Esophagus muscularis mucosa (tissue), 4 donors: ENCODE measurements at regions of chr5 and their contacts with region 1.

Region 1: GRCh38 chr5:65481635-65482295 is at the start of gene ADAMTS6:
- DNase-seq: peak; percentile 94
- H3K4me3 ChIP-seq: peak within 1 kb of the TSS; percentile 53 to 73 (median 66)
- H3K27ac ChIP-seq: peak within 1 kb of the TSS; percentile 90 to 96 (median 92)
- H3K4me1 ChIP-seq: peaks cover 10 to 35% (median 26%) of the 10 kb centered on the region in 4 donors
- H3K27me3 ChIP-seq: no peaks in the 10 kb centered on the region
- CTCF ChIP-seq: no peak
- EP300 ChIP-seq: no peak
- POLR2A ChIP-seq: no peak
- total RNA-seq, gene ADAMTS6: 1.4 to 4.2 (median 2.7) TPM

Region 2: GRCh38 chr5:64811050-64811640 is 670.6 kb before region 1 on chr5:
- intact Hi-C with region 1: loop called (anchors 5 kb)
- DNase-seq: no peak
- H3K4me3 ChIP-seq: no peak overlapping the region
- H3K27ac ChIP-seq: no peak overlapping the region
- H3K4me1 ChIP-seq: peaks cover 4 to 12% (median 9%) of the 10 kb centered on the region in 4 donors
- H3K27me3 ChIP-seq: no peaks in the 10 kb centered on the region
- CTCF ChIP-seq: peak; percentile 57 to 68 (median 65)
- EP300 ChIP-seq: no peak
- POLR2A ChIP-seq: no peak

Region 3: GRCh38 chr5:64958757-64959391 is 522.9 kb before region 1 on chr5:
- intact Hi-C with region 1: loop called (anchors 5 kb)
- DNase-seq: no peak
- H3K4me3 ChIP-seq: no peak overlapping the region
- H3K27ac ChIP-seq: no peak overlapping the region
- H3K4me1 ChIP-seq: no peaks in the 10 kb centered on the region
- H3K27me3 ChIP-seq: no peaks in the 10 kb centered on the region
- CTCF ChIP-seq: peak; percentile 49 to 71 (median 59)
- EP300 ChIP-seq: no peak
- POLR2A ChIP-seq: no peak

Region 4: DNA sequence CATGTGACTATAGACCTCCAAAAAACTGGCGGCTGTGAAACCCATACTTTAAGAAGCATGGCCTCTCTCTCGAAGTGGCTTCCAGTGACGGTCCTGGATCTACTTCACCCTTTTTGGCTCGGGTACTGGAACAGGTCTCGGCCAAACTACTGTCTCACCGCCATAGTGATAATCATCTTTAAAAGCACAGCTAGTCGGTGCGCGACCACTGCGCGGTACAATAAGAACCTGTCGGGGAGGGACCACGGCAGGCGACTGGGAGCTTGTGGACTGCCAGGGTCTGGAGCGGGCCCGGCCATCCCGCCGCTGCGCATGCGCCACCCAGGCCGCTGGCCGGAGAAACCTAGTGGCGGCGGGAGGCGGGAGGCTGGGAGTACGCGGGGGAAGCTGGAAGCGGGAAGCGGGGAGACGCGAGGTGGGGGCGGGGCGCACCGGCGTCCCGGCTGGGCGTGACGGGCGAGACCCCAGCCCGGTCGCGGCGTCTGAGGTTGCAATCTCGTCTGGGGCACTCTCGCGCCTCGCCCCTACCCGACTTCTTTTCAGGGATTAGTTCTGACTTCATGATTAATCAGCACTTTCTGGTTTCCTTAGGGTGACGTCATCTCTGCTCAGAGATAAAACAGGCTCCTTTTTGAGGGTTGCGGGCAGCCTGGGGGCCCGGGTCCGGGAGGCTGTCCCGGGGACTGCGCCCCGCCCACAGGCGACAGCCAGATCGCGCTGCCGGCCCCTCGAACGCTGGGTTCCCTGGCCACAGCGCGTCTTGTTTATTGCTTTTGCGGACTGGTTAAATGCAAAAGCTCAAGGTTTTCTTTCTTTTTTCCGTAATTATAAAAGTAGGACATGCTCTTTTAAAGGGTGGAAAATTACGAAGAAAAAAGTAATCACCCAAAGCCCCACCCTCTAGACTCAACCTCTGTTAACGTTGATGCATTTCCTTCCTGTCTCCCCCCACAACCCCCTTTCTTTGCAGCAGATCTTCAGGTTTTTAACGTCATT is 446.3 kb before region 1 on chr5:
- intact Hi-C with region 1: loop called (anchors 5 kb)
- DNase-seq: peak; percentile 96
- H3K4me3 ChIP-seq: peak overlapping the region; percentile 68 to 86 (median 70)
- H3K27ac ChIP-seq: peak overlapping the region; percentile 90 to 95 (median 94)
- H3K4me1 ChIP-seq: peaks cover 25 to 35% (median 32%) of the 10 kb centered on the region in 4 donors
- H3K27me3 ChIP-seq: no peaks in the 10 kb centered on the region
- CTCF ChIP-seq: no peak
- EP300 ChIP-seq: no peak
- POLR2A ChIP-seq: peak; percentile 3

Region 5: GRCh38 chr5:65102828-65103711 is 378.7 kb before region 1 on chr5:
- intact Hi-C with region 1: loop called (anchors 2 kb)
- DNase-seq: no peak
- H3K4me3 ChIP-seq: peak overlapping the region; percentile 60 to 74 (median 64)
- H3K27ac ChIP-seq: peak overlapping the region; percentile 77 to 90 (median 85)
- H3K4me1 ChIP-seq: peaks cover 10 to 30% (median 21%) of the 10 kb centered on the region in 4 donors
- H3K27me3 ChIP-seq: no peaks in the 10 kb centered on the region
- CTCF ChIP-seq: peak; percentile 41 to 48 (median 48)
- EP300 ChIP-seq: no peak
- POLR2A ChIP-seq: no peak

Region 6: DNA sequence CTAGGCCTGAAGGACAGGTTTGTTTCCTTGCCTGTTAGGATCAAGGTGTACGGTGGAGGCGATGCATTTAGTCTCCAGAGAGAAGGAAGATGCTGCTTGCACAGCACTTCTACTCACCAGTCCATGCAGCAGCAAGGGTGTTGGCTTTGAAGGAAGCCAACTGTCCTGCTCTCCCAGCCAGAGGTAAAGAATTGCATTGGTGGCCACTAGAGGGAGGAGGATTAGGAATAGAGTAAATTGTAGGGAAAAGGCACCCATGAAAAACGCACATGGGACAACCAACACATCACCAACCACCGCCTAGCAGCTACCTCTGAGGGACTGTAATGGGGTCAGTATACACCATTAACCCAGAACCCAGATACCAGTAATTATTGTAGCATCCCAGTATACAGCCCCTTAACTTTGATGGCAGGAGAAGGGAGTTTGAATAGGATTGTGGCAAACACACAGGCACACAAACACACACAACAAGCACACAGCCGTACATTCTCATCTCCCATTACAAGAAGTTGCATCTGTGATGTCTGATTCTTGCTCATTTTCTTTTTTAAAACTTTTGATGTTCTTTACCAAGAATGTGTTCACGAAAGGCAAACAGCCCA is 267.7 kb before region 1 on chr5:
- intact Hi-C with region 1: loop called (anchors 10 kb)
- DNase-seq: no peak
- H3K4me3 ChIP-seq: no peak overlapping the region
- H3K27ac ChIP-seq: no peak overlapping the region
- H3K4me1 ChIP-seq: no peaks in the 10 kb centered on the region
- H3K27me3 ChIP-seq: no peaks in the 10 kb centered on the region
- CTCF ChIP-seq: peak in 2 of 3 experiments; percentile 29 to 55
- EP300 ChIP-seq: no peak
- POLR2A ChIP-seq: no peak

Region 7: GRCh38 chr5:65391591-65391990 is 90.2 kb before region 1 on chr5:
- intact Hi-C with region 1: no loop called
- DNase-seq: no peak
- H3K4me3 ChIP-seq: no peak overlapping the region
- H3K27ac ChIP-seq: no peak overlapping the region
- H3K4me1 ChIP-seq: peaks cover 0 to 12% (median 9%) of the 10 kb centered on the region in 4 donors
- H3K27me3 ChIP-seq: no peaks in the 10 kb centered on the region
- CTCF ChIP-seq: no peak
- EP300 ChIP-seq: no peak
- POLR2A ChIP-seq: no peak